OCI-LY7 (cell line): ENCODE measurements at regions of chr15 and their contacts with region 1.

Region 1: GRCh38 chr15:75367913-75368688 is at the start of gene MAN2C1:
- DNase-seq: peak; percentile 99
- H3K4me3 ChIP-seq: peak within 1 kb of the TSS; percentile 77
- H3K27ac ChIP-seq: peak within 1 kb of the TSS; percentile 88
- H3K4me1 ChIP-seq: peaks cover 23% of the 10 kb centered on the region
- CTCF ChIP-seq: peak; percentile 89
- total RNA-seq, gene MAN2C1: 98.8 and 113 TPM in 2 replicates

Region 2: DNA sequence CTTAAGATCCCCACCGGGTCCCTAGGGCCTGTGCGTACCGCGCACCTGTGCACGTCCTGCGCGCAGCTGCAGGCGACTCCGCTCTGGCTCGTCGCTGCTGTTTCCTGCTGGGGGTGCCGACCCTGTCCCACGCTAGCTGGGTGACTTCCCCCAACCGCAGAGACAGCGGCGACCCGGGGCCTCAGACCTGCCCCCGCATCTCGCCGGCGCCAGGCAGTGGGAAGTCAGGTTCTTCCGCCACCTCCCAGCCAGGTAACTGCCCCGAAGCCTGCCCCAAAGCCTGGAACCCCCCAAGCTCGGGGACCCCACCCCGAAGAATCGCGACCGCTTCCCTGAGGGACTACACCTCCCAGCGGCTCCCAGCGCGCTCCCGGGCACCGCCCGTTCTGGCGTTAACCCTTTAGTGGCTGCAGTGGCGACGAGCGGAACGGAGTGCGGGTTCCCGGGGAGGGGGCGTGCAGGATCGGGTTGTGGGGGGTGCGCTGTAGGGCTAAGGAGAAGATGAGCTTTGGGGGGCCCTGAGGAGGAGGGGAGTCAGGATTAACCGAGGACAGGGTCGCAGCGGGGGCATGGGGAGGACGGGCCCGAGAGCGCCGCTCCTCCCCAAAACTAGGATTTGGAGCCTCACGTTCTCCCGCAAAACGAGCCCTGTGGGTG is 20.8 kb before region 1 on chr15:
- CTCF ChIA-PET with region 1: no interaction called
- POLR2A ChIA-PET with region 1: interaction called, 3 read pairs
- intact Hi-C with region 1: loop called (anchors 1 kb)
- DNase-seq: peak; percentile 96
- H3K4me3 ChIP-seq: peak overlapping the region; percentile 88
- H3K27ac ChIP-seq: peak overlapping the region; percentile 89
- H3K4me1 ChIP-seq: peaks cover 50% of the 10 kb centered on the region
- CTCF ChIP-seq: no peak